Activated CD4-positive, alpha-beta T cell treated with anti-CD3 and anti-CD28 coated beads for 36 hours (primary cell): ENCODE measurements at regions of chr15 and their contacts with region 1.

Region 1: GRCh38 chr15:25287823-25288222 is 151.0 kb downstream of the UBE3A start:
- DNase-seq: no peak
- ATAC-seq: no peak
- H3K4me3 Mint-ChIP-seq: no peak overlapping the region
- H3K27ac Mint-ChIP-seq: no peak overlapping the region
- H3K4me1 Mint-ChIP-seq: no peaks in the 10 kb centered on the region
- H3K27me3 Mint-ChIP-seq: no peaks in the 10 kb centered on the region

Region 2: DNA sequence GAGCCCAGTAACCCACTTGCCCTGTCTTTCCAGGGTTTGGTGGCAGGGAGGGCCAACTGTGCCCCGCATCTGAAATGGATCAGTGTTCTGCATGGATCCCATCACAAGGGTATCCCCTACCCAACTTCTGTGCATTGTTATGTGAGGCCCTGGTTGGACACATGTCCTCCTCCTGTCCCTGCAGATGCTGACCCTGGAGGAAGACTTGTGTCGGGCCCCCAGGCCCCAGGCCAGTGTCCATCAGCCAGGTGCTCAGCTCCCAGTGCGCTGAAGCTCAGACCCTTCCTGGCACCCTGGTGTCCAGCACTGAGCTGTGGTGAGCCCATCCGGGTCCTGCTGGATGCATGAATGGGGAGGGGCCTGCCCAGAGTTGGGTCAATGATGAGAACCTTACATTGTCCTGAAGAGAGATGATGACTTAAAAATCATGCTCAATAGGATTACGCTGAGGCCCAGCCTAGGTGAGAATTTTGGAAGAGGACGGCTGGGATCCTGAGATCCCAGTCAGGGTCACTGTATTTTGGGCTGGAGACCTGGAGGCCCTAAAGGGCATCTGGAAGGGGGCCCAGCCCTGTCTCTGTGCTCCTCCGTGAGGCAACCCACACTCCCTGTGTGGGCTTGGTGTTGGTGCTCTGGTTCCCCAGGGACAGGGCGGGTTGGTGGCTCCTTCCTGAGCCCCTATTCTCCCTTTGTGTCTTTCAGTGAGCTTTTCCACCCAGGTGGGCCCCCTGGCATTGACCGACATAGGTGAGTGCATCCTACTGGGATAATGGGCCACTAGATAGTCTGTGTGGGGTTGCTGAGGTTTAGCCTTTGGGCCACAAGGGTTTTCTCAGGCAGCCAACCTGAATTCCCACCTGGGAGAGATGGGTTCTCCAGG is 48.1 kb before region 1 on chr15:
- CTCF ChIA-PET with region 1: no interaction called
- POLR2A ChIA-PET with region 1: no interaction called
- intact Hi-C with region 1: loop called in 1 of 2 experiments (anchors 10 kb)
- DNase-seq: no peak
- ATAC-seq: no peak
- H3K4me3 Mint-ChIP-seq: no peak overlapping the region
- H3K27ac Mint-ChIP-seq: no peak overlapping the region
- H3K4me1 Mint-ChIP-seq: no peaks in the 10 kb centered on the region
- H3K27me3 Mint-ChIP-seq: no peaks in the 10 kb centered on the region